ENCODE measurements at regions of chr1 and their contacts with region 1.

Region 1: GRCh38 chr1:84433258-84434080 is 35.2 kb downstream of the DNASE2B start:
- H3K4me3 ChIP-seq: no peak overlapping the region
- H3K27ac ChIP-seq: no peak overlapping the region
- H3K4me1 ChIP-seq: no peaks in the 10 kb centered on the region
- CTCF ChIP-seq: peak; percentile 57; the same call in 1 of the 2 replicates

Region 2: DNA sequence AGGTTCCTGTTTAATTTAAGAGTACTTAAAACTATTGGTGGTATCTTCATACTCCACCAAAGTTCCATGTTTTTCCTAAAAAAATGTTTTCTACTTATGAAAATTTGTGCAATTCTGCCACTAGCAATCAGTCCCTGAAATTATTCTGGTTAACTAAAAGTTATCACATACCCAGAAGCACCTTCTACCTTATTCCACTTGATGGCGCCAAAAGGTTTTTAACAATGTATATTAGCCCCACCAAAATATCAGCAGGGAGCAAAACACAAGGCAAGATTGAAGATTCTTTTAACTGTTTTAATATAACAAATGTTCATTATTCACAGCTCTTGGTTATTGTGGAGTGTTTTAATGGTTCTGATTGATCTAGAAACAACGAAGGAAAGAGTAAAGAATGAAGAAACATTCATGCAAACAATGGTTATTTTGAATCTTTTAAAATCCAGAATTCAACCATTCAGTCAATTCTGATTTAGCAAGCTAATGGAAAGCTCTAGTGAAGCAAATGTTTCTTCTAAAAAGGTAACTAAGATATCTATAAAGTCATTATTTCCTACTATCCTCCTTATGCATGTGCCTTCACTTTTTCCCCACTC is 501.7 kb before region 1 on chr1:
- CTCF ChIA-PET with region 1: interaction called, 10 read pairs
- POLR2A ChIA-PET with region 1: no interaction called
- H3K4me3 ChIP-seq: no peak overlapping the region
- H3K27ac ChIP-seq: no peak overlapping the region
- H3K4me1 ChIP-seq: no peaks in the 10 kb centered on the region
- CTCF ChIP-seq: peak; percentile 43; the same call in 1 of the 2 replicates

Region 3: DNA sequence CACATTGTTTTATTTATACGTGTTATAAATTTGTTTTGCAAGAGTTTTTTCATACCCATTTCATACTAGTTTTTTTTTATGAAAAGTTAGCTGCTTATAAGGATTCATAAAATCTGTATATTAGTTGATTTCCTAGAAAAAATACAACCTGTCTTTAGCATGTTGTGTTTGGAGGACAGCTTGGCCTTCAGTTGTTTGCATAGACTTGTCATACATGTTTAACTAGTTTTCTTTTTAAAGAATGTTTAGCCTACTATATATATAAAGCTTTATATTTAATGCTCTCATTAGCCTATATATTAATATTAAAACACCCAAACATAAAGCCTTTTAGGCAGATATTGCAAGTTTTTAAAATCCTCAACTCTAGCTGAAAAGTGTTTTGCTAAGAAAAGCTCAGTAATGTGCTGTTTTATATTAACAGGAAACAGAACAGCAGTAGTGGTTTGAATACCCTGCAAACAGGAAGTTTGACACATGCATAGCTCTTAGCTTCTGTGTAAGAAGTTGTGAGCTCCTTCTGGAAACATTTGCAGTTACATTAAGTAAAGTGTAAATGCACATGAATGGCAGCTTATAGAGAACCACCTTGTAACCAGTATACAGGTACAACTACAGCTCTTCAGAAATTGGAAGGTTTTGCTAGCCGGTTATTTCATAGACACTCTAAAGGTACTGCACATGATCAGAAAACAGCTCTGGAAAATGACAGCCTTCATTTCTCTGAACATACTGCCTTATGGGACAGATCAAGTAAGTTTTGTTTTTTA is 289.5 kb before region 1 on chr1 and contains the start of gene PRKACB:
- CTCF ChIA-PET with region 1: interaction called, 17 read pairs
- POLR2A ChIA-PET with region 1: interaction called, 8 read pairs
- H3K4me3 ChIP-seq: no peak within 1 kb of the TSS
- H3K27ac ChIP-seq: no peak within 1 kb of the TSS
- H3K4me1 ChIP-seq: no peaks in the 10 kb centered on the region
- CTCF ChIP-seq: no peak

Region 4: DNA sequence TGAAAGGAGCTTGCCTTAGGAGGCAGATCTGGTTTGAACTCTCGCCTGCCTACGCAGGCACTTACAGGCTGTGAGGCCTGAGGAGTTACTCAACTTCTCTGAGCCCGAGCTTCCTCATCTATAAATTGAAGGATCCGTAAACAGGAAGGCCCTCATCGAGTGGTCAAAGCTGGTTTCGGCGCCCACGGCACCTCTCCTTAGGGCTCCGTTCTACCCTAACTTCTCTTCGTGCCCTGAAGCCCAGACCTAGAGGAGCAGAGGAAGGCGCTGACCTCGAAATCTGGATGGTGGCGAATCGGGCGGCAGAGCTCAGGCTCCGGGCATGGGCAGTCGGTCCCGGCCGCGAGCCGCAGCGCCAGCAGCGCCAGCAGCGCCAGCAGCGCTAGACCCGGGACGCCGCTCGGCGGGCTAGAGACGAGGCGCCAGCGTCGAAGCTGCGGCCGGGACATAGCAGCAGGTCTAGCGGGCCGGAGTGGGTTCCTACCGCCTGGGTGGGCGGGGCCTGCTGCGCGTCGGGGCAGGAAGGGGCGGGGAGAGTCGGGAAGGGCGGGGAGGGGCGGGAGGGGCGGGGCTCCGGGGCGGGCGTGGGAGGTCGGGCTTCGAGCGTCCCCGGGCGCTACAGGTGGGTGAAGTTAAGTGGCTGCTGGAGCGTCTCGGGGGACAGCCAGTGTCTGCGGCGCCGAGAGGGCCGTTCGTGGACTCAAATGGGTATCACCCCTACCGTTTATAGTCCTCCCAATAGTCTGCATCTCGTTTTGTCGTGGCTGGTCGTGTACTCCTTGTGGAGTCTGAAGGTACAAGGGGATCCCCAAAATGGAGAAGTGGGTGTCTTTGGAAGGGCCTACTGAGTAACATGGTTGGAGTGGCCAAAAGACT is 140.7 kb after region 1 on chr1 and contains the start of gene CTBS:
- CTCF ChIA-PET with region 1: no interaction called
- POLR2A ChIA-PET with region 1: no interaction called
- H3K4me3 ChIP-seq: peak within 1 kb of the TSS; percentile 63
- H3K27ac ChIP-seq: peak within 1 kb of the TSS; percentile 93
- H3K4me1 ChIP-seq: no peaks in the 10 kb centered on the region
- CTCF ChIP-seq: peak; percentile 57